ENCODE measurements at regions of chr9 and their contacts with region 1.

Region 1: DNA sequence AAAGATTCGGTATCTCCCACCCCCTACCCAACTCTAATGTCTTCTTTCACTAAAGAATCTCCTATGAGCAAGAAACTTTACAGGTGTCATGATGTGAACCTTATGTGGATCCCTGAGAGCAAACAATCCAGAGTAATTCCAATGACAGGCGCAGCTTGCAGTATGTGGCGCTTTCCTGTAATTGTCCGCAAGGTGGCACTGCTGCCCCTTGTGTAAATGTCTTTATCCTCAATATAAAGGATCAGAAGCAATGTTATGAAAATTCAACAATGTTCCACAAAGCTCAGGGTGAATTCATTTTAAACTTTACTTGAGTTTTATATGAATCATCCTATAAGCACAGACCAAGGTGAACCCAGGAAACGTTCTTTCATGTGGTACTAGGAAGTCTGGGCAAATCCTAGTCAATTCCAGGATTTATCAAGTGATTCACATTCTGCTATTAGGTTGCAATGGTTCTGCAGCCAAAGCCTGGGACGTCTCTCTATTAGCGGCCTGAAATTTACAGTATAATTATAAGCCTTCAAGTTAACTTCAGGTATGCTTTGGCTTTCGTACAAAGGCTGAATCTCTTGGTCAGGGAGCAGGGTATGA is 113.7 kb downstream of the TRPM6 start:
- DNase-seq: peak; percentile 81
- ATAC-seq: peak; percentile 73
- H3K4me3 Mint-ChIP-seq: no peak overlapping the region
- H3K27ac Mint-ChIP-seq: no peak overlapping the region
- H3K4me1 Mint-ChIP-seq: no peaks in the 10 kb centered on the region
- H3K27me3 Mint-ChIP-seq: peaks cover 3% of the 10 kb centered on the region

Region 2: GRCh38 chr9:74952281-74953151 is 178.5 kb after region 1 on chr9 and contains the start of gene C9orf40:
- CTCF ChIA-PET with region 1: interaction called, 23 read pairs
- POLR2A ChIA-PET with region 1: interaction called, 3 read pairs
- DNase-seq: peak; percentile 92
- ATAC-seq: peak; percentile 92
- H3K4me3 Mint-ChIP-seq: peak within 1 kb of the TSS; percentile 98
- H3K27ac Mint-ChIP-seq: peak within 1 kb of the TSS; percentile 97
- H3K4me1 Mint-ChIP-seq: peaks cover 40% of the 10 kb centered on the region
- H3K27me3 Mint-ChIP-seq: no peaks in the 10 kb centered on the region
- total RNA-seq, gene C9orf40: 22.9 TPM

Region 3: GRCh38 chr9:75013735-75014134 is 239.8 kb after region 1 on chr9:
- CTCF ChIA-PET with region 1: interaction called, 14 read pairs
- POLR2A ChIA-PET with region 1: no interaction called
- DNase-seq: no peak
- ATAC-seq: no peak
- H3K4me3 Mint-ChIP-seq: no peak overlapping the region
- H3K27ac Mint-ChIP-seq: peak overlapping the region; percentile 13
- H3K4me1 Mint-ChIP-seq: peaks cover 33% of the 10 kb centered on the region
- H3K27me3 Mint-ChIP-seq: no peaks in the 10 kb centered on the region

Region 4: GRCh38 chr9:75053869-75054268 is 279.9 kb after region 1 on chr9:
- CTCF ChIA-PET with region 1: interaction called, 13 read pairs
- POLR2A ChIA-PET with region 1: no interaction called
- DNase-seq: no peak
- ATAC-seq: no peak
- H3K4me3 Mint-ChIP-seq: no peak overlapping the region
- H3K27ac Mint-ChIP-seq: no peak overlapping the region
- H3K4me1 Mint-ChIP-seq: no peaks in the 10 kb centered on the region
- H3K27me3 Mint-ChIP-seq: no peaks in the 10 kb centered on the region

Region 5: GRCh38 chr9:75083188-75083970 is 309.4 kb after region 1 on chr9:
- CTCF ChIA-PET with region 1: interaction called, 21 read pairs
- POLR2A ChIA-PET with region 1: interaction called, 3 read pairs
- DNase-seq: peak; percentile 61
- ATAC-seq: no peak
- H3K4me3 Mint-ChIP-seq: no peak overlapping the region
- H3K27ac Mint-ChIP-seq: peak overlapping the region; percentile 43
- H3K4me1 Mint-ChIP-seq: peaks cover 36% of the 10 kb centered on the region
- H3K27me3 Mint-ChIP-seq: no peaks in the 10 kb centered on the region